Left ventricle myocardium inferior (tissue), 1 donor: ENCODE measurements at regions of chr7 and their contacts with region 1.

Region 1: GRCh38 chr7:105098863-105099515 is 85.0 kb downstream of the KMT2E start:
- DNase-seq: no peak
- H3K4me3 ChIP-seq: no peak overlapping the region
- H3K27ac ChIP-seq: peak overlapping the region; percentile 62
- H3K4me1 ChIP-seq: peaks cover 43% of the 10 kb centered on the region
- H3K27me3 ChIP-seq: no peaks in the 10 kb centered on the region
- CTCF ChIP-seq: no peak

Region 2: DNA sequence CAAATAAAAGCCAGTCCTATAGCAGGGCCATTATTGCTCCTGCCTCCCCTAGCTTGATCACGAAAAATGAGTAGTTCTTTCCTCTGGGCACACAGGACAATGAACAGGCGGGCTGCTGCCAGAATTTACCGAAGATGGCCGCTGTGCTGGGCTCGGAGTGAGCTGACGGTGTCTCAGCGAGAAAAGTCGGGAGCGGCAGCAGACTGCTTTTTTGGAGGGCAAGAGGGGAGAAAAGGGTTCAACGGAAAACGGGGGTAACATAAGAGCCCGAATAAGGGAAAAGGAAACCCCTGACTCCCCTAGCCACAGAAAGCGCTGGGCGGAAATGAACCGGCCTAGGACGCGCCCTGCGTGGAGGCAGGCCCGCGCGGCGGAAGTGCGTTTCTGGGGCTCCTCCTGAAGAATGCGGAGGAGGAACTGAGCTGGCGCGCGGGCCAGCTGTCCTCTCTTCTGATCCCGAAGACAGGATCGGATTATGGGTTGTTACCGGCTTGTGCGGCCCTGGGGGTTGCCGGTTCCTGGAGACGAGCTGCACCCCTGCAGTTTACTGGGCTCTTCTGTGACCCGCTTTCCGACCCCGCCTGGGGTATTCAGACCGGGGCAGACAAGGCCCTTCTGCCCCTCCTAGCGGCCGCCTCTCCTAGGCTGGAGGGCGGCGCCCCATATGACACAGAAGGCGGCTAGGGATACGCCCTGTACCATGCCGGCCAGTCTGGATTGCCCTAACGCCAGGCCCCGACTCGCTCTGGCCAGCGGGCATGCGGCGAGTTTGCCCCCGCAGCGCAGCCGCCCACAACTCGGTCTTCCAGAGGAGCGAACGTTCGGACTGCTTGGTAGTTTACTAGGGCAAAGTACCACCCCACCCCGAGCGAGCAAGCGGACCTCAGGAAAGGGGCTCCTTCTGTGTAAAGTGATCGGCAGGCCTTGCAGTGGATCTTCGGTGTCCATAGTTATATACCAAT is 115.1 kb before region 1 on chr7:
- intact Hi-C with region 1: loop called (anchors 10 kb)
- DNase-seq: peak; percentile 91
- H3K4me3 ChIP-seq: peak overlapping the region; percentile 73
- H3K27ac ChIP-seq: peak overlapping the region; percentile 98
- H3K4me1 ChIP-seq: peaks cover 45% of the 10 kb centered on the region
- H3K27me3 ChIP-seq: no peaks in the 10 kb centered on the region
- CTCF ChIP-seq: peak; percentile 65